Naive thymus-derived CD4-positive, alpha-beta T cell (primary cell): ENCODE measurements at regions of chr15 and their contacts with region 1.

Region 1: GRCh38 chr15:90233376-90234095 is at the start of gene CIB1:
- DNase-seq: peak in 7 of 9 donors; percentile 91 to 97 (median 95)
- ATAC-seq: peak; percentile 89
- H3K4me3 ChIP-seq: peak within 1 kb of the TSS; percentile 92
- H3K4me3 Mint-ChIP-seq: peak within 1 kb of the TSS; percentile 87 to 95 (median 92)
- H3K27ac ChIP-seq: peak within 1 kb of the TSS; percentile 99
- H3K27ac Mint-ChIP-seq: peak within 1 kb of the TSS; percentile 96 to 100 (median 98)
- H3K4me1 ChIP-seq: peaks cover 39 to 43% of the 10 kb centered on the region in 2 donors
- H3K4me1 Mint-ChIP-seq: peaks cover 40 to 67% (median 57%) of the 10 kb centered on the region in 7 donors
- H3K27me3 ChIP-seq: no peaks in the 10 kb centered on the region
- H3K27me3 Mint-ChIP-seq: no peaks in the 10 kb centered on the region
- total RNA-seq, gene CIB1: 76.8 to 149 (median 127) TPM

Region 2: DNA sequence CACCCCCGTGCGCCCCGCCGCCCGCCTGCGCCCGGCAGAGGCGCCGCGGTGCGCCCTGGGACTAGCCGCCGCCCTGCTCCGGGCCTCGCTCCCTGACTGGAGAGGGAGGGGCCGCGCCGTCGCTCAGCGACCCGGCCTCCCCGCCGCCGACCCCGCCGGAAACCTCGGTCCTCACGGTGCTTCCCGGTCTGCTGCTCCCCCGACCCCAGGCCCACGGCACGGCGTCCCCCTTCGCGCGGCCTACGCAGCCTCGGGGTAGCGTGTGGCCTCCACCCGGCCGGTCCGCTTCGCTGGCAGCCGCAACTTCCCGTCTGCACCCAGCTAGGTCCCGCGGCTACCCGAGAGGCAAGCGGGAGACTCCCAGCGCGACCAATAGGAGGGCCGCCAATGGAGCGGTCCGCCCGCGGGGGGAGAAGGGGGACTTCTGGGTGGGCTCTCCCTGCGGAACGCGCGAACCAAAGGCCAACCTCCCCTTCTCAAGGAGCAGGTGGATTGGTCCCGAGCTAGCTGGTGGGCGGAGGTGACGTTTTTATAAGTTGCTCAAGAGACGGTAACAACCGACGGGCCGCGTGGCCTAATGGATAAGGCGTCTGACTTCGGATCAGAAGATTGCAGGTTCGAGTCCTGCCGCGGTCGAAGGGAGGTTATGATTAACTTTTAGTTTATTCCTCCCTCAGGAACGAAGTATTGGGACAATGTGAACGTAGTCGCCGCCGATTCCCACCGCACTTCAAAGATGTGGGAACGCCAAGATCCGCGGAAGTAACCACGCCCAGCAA is 898.8 kb before region 1 on chr15 and contains the start of gene POLG:
- CTCF ChIA-PET with region 1: no interaction called
- POLR2A ChIA-PET with region 1: no interaction called
- intact Hi-C with region 1: loop called in 1 of 2 experiments (anchors 5 kb)
- DNase-seq: peak; percentile 92 to 100 (median 99)
- ATAC-seq: peak; percentile 95
- H3K4me3 ChIP-seq: peak within 1 kb of the TSS; percentile 91
- H3K4me3 Mint-ChIP-seq: peak within 1 kb of the TSS; percentile 88 to 98 (median 95)
- H3K27ac ChIP-seq: peak within 1 kb of the TSS; percentile 82
- H3K27ac Mint-ChIP-seq: peak within 1 kb of the TSS; percentile 93 to 100 (median 100)
- H3K4me1 ChIP-seq: peaks cover 44 to 48% of the 10 kb centered on the region in 2 donors
- H3K4me1 Mint-ChIP-seq: peaks cover 28 to 55% (median 51%) of the 10 kb centered on the region in 7 donors
- H3K27me3 ChIP-seq: no peaks in the 10 kb centered on the region
- H3K27me3 Mint-ChIP-seq: peaks cover 0 to 9% (median 4%) of the 10 kb centered on the region in 5 donors
- total RNA-seq, gene POLG: 121 to 136 (median 129) TPM

Region 3: DNA sequence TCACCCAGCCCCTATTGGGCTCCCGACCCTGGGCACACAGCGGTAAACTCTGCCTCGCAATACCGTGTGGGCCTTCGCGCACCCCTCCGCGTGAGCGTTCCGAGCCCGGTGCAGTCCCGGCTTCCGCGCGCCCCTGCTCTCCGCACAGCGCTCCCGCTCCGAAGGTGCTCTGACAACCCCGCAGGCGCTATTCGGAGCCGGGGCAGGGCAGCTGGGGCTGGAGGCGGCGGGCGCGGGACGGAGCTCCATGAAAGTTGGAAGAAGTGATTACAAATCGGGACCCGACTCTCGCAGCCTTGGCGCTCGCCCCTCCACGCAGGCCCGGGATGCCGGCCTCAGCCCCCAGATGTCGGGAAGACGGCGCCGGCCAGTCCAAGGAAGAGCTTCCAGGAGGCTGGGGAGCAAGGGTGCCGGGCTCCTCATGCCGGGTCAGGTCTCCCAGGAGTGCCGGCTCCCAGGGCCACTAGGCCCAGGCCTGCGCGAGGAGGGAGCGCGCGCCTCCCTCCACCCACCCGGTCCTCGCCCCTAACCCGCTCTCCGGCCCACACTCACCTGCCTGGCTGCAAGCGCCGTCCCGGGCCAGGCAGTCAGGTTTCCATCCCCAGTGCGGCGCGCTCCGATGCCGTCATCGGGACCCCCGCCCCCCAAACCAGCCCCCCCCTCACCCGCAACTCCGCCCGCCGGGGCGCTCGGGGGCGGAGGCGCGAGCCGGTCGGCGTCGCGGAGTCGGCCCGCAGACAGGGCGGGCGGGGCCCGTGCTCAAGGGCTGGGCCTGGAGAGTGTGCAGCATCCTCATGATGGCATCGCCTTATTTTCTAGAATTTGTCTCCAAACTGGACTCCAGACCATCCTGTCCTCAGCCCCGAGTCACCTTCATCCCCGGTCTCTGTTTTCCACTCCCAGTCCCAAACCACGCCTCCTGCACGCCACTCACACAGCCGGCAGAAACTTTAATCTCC is 578.4 kb before region 1 on chr15 and contains the start of gene KIF7:
- CTCF ChIA-PET with region 1: no interaction called
- POLR2A ChIA-PET with region 1: no interaction called
- intact Hi-C with region 1: no loop called
- DNase-seq: peak in 1 of 9 donors; percentile 34
- ATAC-seq: peak; percentile 66
- H3K4me3 ChIP-seq: no peak within 1 kb of the TSS
- H3K4me3 Mint-ChIP-seq: peak within 1 kb of the TSS; percentile 27 to 82 (median 72)
- H3K27ac ChIP-seq: no peak within 1 kb of the TSS
- H3K27ac Mint-ChIP-seq: no peak within 1 kb of the TSS
- H3K4me1 ChIP-seq: peaks cover 0 to 4% of the 10 kb centered on the region in 2 donors
- H3K4me1 Mint-ChIP-seq: peaks cover 10 to 16% (median 12%) of the 10 kb centered on the region in 7 donors
- H3K27me3 ChIP-seq: peaks cover 0 to 3% of the 10 kb centered on the region in 2 donors
- H3K27me3 Mint-ChIP-seq: peaks cover 43 to 72% (median 56%) of the 10 kb centered on the region in 5 donors
- total RNA-seq, gene KIF7: 0.08 to 0.27 (median 0.22) TPM in 3 of 5 experiments, not detected in the others

Region 4: GRCh38 chr15:89912674-89913396 is 320.7 kb before region 1 on chr15 and contains the start of gene ARPIN:
- CTCF ChIA-PET with region 1: no interaction called
- POLR2A ChIA-PET with region 1: no interaction called
- intact Hi-C with region 1: no loop called
- DNase-seq: peak in 2 of 9 donors; percentile 10 to 19
- ATAC-seq: peak; percentile 48
- H3K4me3 ChIP-seq: no peak within 1 kb of the TSS
- H3K4me3 Mint-ChIP-seq: peak within 1 kb of the TSS in 8 of 10 donors; percentile 27 to 63 (median 45)
- H3K27ac ChIP-seq: no peak within 1 kb of the TSS
- H3K27ac Mint-ChIP-seq: no peak within 1 kb of the TSS
- H3K4me1 ChIP-seq: peaks cover 0 to 5% of the 10 kb centered on the region in 2 donors
- H3K4me1 Mint-ChIP-seq: peaks cover 0 to 9% (median 0%) of the 10 kb centered on the region in 7 donors
- H3K27me3 ChIP-seq: peaks cover 4 to 5% of the 10 kb centered on the region in 2 donors
- H3K27me3 Mint-ChIP-seq: peaks cover 36 to 54% (median 39%) of the 10 kb centered on the region in 5 donors
- total RNA-seq, gene ARPIN: 0.08 to 1.1 (median 0.31) TPM in 4 of 5 experiments, not detected in the other

Region 5: DNA sequence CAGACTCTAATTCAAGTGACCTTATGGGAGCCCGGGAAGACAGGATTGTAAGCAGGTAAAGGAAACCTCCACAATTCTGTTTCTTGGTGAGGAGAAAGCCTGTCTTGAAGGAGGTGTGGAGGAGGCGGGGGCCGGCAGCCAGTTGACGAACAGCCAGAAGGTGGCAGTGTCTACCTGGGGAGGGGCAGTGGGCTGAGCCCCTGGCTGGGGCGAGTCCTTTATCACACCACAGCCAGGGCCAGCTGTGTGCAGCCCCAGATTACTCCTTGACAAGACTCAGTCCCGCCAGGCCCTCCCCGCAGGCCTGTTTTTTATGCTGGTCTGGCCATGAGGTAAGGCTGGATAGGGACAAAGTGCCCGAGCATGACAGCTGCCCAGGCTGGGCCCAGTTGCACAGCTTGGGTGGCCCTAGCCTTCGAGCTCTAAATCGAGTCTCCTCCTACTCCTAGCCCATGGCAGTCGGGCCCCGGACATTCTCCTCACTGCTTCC is 90.3 kb before region 1 on chr15:
- CTCF ChIA-PET with region 1: no interaction called
- POLR2A ChIA-PET with region 1: no interaction called
- intact Hi-C with region 1: loop called (anchors 5 kb)
- DNase-seq: peak; percentile 50 to 67 (median 58)
- ATAC-seq: peak; percentile 88
- H3K4me3 ChIP-seq: peak overlapping the region; percentile 9
- H3K4me3 Mint-ChIP-seq: peak overlapping the region; percentile 49 to 77 (median 67)
- H3K27ac ChIP-seq: no peak overlapping the region
- H3K27ac Mint-ChIP-seq: peak overlapping the region in 8 of 9 donors; percentile 37 to 92 (median 79)
- H3K4me1 ChIP-seq: peaks cover 0 to 4% of the 10 kb centered on the region in 2 donors
- H3K4me1 Mint-ChIP-seq: peaks cover 6 to 36% (median 26%) of the 10 kb centered on the region in 7 donors
- H3K27me3 ChIP-seq: no peaks in the 10 kb centered on the region
- H3K27me3 Mint-ChIP-seq: peaks cover 0 to 2% (median 0%) of the 10 kb centered on the region in 5 donors

Region 6: DNA sequence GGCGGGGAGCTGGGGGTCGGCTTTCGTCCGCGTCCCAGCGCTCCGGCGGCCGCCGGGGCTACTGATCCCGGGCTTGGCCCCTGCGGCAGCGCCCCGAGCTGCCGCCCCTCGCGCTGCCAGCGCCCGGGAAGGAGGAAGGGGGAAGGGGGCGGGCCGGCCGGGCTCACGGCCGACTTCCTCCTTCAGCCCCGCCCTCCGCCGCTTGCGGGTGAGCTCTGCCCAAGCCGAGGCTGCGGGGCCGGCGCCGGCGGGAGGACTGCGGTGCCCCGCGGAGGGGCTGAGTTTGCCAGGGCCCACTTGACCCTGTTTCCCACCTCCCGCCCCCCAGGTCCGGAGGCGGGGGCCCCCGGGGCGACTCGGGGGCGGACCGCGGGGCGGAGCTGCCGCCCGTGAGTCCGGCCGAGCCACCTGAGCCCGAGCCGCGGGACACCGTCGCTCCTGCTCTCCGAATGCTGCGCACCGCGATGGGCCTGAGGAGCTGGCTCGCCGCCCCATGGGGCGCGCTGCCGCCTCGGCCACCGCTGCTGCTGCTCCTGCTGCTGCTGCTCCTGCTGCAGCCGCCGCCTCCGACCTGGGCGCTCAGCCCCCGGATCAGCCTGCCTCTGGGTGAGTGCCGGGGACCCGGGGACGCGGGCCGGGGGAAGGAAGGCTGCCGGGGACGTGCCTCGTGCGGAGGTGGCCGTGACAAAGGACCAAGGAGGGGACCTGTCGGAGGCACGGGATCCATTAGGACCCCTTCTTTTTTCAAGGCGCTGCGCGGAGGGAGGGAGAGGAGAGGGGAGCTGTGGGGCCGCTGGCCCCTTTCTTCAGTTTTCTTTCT is 32.2 kb before region 1 on chr15 and contains the start of gene SEMA4B:
- CTCF ChIA-PET with region 1: interaction called, 3 read pairs
- POLR2A ChIA-PET with region 1: interaction called, 95 read pairs
- intact Hi-C with region 1: loop called (anchors 1 kb)
- DNase-seq: peak; percentile 56 to 81 (median 70)
- ATAC-seq: peak; percentile 92
- H3K4me3 ChIP-seq: peak within 1 kb of the TSS; percentile 67
- H3K4me3 Mint-ChIP-seq: peak within 1 kb of the TSS; percentile 84 to 96 (median 89)
- H3K27ac ChIP-seq: peak within 1 kb of the TSS; percentile 85
- H3K27ac Mint-ChIP-seq: peak within 1 kb of the TSS; percentile 66 to 90 (median 82)
- H3K4me1 ChIP-seq: peaks cover 11 to 23% of the 10 kb centered on the region in 2 donors
- H3K4me1 Mint-ChIP-seq: peaks cover 21 to 36% (median 25%) of the 10 kb centered on the region in 7 donors
- H3K27me3 ChIP-seq: no peaks in the 10 kb centered on the region
- H3K27me3 Mint-ChIP-seq: peaks cover 0 to 3% (median 0%) of the 10 kb centered on the region in 5 donors
- total RNA-seq, gene SEMA4B: 15.9 to 31.0 (median 20.7) TPM

Region 7: DNA sequence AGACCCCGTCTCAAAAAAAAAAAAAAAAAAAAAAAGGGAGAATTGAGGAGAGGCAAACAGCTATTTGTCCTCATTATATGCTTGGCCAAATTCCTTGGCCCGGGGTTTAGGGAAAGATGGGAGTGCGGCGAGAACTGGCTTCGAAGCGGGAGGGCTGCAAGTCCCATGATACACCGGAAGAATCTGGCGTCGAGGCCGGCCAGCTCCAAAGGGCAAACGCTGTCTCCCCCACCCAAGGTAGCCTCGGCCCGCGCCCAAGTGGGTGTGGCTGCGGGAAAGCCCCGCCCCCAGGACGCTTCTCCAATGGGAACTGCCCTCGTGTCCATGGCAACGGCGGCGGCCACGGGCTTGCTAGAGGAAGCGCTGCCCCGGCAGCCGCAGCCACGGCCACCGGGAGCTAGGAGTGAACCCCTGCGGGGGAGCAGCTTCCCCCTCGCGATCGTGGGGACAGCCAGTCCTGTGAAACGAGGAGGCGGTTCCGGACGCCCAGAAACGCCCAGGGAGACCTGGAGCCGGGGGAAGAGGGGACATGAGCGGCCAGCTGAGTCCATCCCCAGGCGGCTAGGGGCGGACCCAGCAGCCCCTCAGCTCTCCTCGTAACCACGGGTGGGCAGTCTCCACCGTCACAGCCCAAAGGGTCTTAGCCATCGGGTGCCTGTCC is 15.8 kb after region 1 on chr15 and contains the start of gene TTLL13:
- CTCF ChIA-PET with region 1: no interaction called
- POLR2A ChIA-PET with region 1: interaction called, 34 read pairs
- intact Hi-C with region 1: loop called (anchors 1 kb)
- DNase-seq: peak in 8 of 9 donors; percentile 29 to 89 (median 54)
- ATAC-seq: peak; percentile 90
- H3K4me3 ChIP-seq: peak within 1 kb of the TSS; percentile 54
- H3K4me3 Mint-ChIP-seq: peak within 1 kb of the TSS; percentile 64 to 88 (median 80)
- H3K27ac ChIP-seq: peak within 1 kb of the TSS; percentile 51
- H3K27ac Mint-ChIP-seq: peak within 1 kb of the TSS in 7 of 9 donors; percentile 23 to 90 (median 78)
- H3K4me1 ChIP-seq: no peaks in the 10 kb centered on the region
- H3K4me1 Mint-ChIP-seq: peaks cover 10 to 23% (median 16%) of the 10 kb centered on the region in 7 donors
- H3K27me3 ChIP-seq: no peaks in the 10 kb centered on the region
- H3K27me3 Mint-ChIP-seq: peaks cover 0 to 3% (median 0%) of the 10 kb centered on the region in 5 donors
- total RNA-seq, gene TTLL13: 0.40 to 1.8 (median 0.63) TPM in 4 of 5 experiments, not detected in the other

Region 8: DNA sequence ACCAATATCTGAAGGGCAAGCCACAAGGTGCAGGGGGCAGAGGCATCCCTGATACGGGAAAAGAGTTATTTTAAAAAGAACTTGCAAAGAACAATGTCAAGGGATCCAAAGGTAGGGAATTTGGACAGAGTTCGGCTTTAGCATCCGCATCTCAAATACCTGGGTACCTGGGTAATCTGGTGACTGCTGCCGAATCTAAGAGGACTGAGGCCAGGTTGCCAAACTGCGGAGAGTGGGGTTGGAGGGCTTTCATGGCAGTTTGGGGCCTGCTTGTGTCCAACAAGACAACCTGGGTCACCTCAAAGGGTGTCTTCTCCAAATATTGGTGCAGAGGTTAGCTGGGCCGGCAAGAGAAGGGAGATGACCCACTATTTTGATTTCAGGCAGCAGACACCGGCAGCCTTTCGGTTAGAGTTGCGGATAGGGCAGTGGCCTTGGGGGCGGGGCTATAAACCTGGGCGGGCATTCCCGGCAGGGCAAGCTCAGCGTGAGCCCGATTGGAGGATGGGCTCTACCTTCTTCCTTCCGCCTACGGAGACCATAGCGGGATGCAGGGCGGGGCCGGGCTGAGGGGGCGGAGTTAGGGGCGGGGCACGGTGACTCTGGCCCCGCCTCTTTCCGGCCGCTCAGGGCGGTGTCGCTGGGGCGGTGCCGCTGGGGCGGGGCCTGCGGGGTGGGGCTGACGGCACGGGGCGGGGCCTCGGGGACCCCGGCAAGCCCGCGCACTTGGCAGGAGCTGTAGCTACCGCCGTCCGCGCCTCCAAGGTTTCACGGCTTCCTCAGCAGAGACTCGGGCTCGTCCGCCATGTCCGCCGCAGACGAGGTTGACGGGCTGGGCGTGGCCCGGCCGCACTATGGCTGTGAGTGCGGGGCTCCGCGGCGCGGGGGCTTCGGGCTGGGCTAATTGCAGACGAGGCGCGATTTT is 154.3 kb after region 1 on chr15 and contains the start of gene IQGAP1:
- CTCF ChIA-PET with region 1: no interaction called
- POLR2A ChIA-PET with region 1: no interaction called
- intact Hi-C with region 1: loop called (anchors 1 kb)
- DNase-seq: peak; percentile 91 to 96 (median 94)
- ATAC-seq: peak; percentile 97
- H3K4me3 ChIP-seq: peak within 1 kb of the TSS; percentile 88
- H3K4me3 Mint-ChIP-seq: peak within 1 kb of the TSS; percentile 80 to 95 (median 92)
- H3K27ac ChIP-seq: peak within 1 kb of the TSS; percentile 93
- H3K27ac Mint-ChIP-seq: peak within 1 kb of the TSS; percentile 68 to 99 (median 94)
- H3K4me1 ChIP-seq: peaks cover 29 to 33% of the 10 kb centered on the region in 2 donors
- H3K4me1 Mint-ChIP-seq: peaks cover 38 to 56% (median 50%) of the 10 kb centered on the region in 7 donors
- H3K27me3 ChIP-seq: no peaks in the 10 kb centered on the region
- H3K27me3 Mint-ChIP-seq: no peaks in the 10 kb centered on the region
- total RNA-seq, gene IQGAP1: 81.8 to 263 (median 93.8) TPM